ENCODE measurements at regions of chr6 and their contacts with region 1.

Region 1: GRCh38 chr6:37244430-37245310 is 12.9 kb upstream of the TBC1D22B start:
- DNase-seq: no peak
- CTCF ChIP-seq: no peak

Region 2: DNA sequence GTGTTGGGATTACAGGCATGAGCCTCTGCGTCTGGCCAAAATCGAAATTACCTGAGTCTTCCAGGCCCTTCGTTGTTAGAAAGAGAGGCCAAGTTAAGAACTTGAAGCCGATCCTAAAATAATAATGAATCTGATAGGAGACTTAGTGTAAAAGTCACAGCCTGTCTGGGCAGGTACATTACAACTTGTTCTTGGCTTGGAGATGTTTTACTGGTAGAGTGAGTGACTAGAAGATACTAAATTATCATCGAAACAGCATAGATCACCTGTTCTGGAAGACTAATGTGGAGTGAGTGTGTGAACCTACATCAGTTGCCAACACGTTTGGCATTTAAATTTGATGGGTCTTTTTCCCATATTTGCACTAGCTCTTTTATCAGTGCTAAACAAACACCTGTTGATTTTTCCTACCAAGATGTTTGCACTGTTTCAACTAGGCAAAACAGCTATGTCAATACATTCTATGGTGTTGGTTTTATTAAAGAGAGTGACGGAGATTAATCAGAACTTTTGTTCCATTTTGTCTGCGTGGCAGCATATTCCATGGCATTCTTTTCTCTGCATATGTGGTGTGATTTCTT is 17.9 kb after region 1 on chr6:
- CTCF ChIA-PET with region 1: interaction called, 4 read pairs
- POLR2A ChIA-PET with region 1: interaction called, 20 read pairs
- DNase-seq: no peak
- CTCF ChIP-seq: no peak

Region 3: DNA sequence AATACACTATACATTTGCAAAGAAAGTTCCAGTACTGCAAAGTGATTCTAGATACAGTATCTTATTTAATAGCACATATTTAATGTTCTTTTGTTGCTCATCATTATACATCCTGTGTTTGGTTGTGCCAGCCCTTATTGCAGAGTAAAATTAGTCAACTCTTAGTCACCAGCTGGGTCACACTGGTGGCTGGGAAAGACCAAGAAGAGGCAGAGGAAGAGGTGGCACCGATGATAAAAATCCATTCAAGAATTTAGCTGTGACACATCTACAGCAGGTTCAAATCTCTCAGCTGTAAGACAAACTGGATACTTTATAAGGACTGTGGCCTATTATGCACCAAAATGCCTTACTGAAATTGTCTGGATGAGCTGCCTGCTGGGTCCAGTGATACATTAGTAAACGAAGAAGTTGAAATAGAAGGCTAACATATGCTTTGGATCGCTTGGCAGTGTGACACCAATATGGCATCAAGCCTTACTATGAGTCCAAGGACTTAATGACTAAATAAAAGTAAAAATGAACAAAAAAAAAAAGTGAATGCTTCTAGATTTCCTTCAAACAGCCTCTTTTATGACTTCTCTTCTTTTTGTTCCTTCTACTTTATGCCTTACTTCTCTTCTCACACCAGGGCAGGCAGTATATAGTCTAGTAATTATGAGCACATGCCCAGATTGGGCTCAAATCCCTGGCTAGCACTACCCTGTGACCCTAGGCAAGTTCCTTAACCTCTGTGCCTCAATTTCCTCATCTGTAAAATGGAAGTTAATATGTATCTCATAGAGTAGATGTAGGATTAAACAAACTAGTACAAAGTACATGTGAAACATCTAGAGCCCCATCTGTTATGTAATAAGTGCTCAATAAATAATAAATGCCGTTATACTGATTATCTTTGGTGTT is 79.7 kb after region 1 on chr6:
- CTCF ChIA-PET with region 1: no interaction called
- POLR2A ChIA-PET with region 1: no interaction called
- DNase-seq: no peak
- CTCF ChIP-seq: no peak

Region 4: GRCh38 chr6:37365762-37366161 is 121.1 kb after region 1 on chr6:
- CTCF ChIA-PET with region 1: no interaction called
- POLR2A ChIA-PET with region 1: no interaction called
- DNase-seq: no peak
- CTCF ChIP-seq: peak; percentile 16

Measured in GM10248 (cell line).